Activated T-helper 2 cell treated with anti-CD3 and anti-CD28 coated beads, Interferon-gamma antibody, Interleukin-2, Interleukin-4, amounts not matched to agents 10 μg/mL and 5 μg/mL and 100 μg/mL, durations not matched to agents 14 hours and 24 hours and 36 hours (primary cell): ENCODE measurements at regions of chr12 and their contacts with region 1.

Region 1: GRCh38 chr12:42097971-42098370 is 46.7 kb downstream of the GXYLT1 start:
- DNase-seq: no peak
- H3K4me3 Mint-ChIP-seq: peak overlapping the region; percentile 81
- H3K27ac Mint-ChIP-seq: peak overlapping the region; percentile 91
- H3K4me1 Mint-ChIP-seq: peaks cover 31% of the 10 kb centered on the region
- H3K27me3 Mint-ChIP-seq: no peaks in the 10 kb centered on the region

Region 2: GRCh38 chr12:42144408-42145196 is 46.6 kb after region 1 on chr12 and contains the start of gene GXYLT1:
- intact Hi-C with region 1: loop called (anchors 1 kb)
- DNase-seq: peak; percentile 77
- H3K4me3 Mint-ChIP-seq: peak within 1 kb of the TSS; percentile 92
- H3K27ac Mint-ChIP-seq: peak within 1 kb of the TSS; percentile 79
- H3K4me1 Mint-ChIP-seq: peaks cover 32% of the 10 kb centered on the region
- H3K27me3 Mint-ChIP-seq: peaks cover 7% of the 10 kb centered on the region
- total RNA-seq, gene GXYLT1: 9.8 and 11.0 TPM in 2 replicates